Activated CD4-positive, alpha-beta memory T cell treated with anti-CD3 and anti-CD28 coated beads for 36 hours (primary cell): ENCODE measurements at regions of chr7 and their contacts with region 1.

Region 1: GRCh38 chr7:23597094-23598091 is at the start of gene CCDC126:
- DNase-seq: peak; percentile 88
- H3K4me3 Mint-ChIP-seq: peak within 1 kb of the TSS; percentile 87
- H3K27ac Mint-ChIP-seq: peak within 1 kb of the TSS; percentile 64
- H3K4me1 Mint-ChIP-seq: peaks cover 61% of the 10 kb centered on the region
- H3K27me3 Mint-ChIP-seq: no peaks in the 10 kb centered on the region
- total RNA-seq, gene CCDC126: 5.2 to 5.7 TPM

Region 2: GRCh38 chr7:23013715-23014649 is 583.4 kb before region 1 on chr7 and contains the start of gene HYCC1:
- CTCF ChIA-PET with region 1: no interaction called
- POLR2A ChIA-PET with region 1: no interaction called
- intact Hi-C with region 1: loop called (anchors 10 kb)
- DNase-seq: peak; percentile 100
- H3K4me3 Mint-ChIP-seq: peak within 1 kb of the TSS; percentile 94
- H3K27ac Mint-ChIP-seq: peak within 1 kb of the TSS; percentile 80
- H3K4me1 Mint-ChIP-seq: peaks cover 17% of the 10 kb centered on the region
- H3K27me3 Mint-ChIP-seq: no peaks in the 10 kb centered on the region
- total RNA-seq, gene HYCC1: 20.7 to 23.9 TPM

Region 3: DNA sequence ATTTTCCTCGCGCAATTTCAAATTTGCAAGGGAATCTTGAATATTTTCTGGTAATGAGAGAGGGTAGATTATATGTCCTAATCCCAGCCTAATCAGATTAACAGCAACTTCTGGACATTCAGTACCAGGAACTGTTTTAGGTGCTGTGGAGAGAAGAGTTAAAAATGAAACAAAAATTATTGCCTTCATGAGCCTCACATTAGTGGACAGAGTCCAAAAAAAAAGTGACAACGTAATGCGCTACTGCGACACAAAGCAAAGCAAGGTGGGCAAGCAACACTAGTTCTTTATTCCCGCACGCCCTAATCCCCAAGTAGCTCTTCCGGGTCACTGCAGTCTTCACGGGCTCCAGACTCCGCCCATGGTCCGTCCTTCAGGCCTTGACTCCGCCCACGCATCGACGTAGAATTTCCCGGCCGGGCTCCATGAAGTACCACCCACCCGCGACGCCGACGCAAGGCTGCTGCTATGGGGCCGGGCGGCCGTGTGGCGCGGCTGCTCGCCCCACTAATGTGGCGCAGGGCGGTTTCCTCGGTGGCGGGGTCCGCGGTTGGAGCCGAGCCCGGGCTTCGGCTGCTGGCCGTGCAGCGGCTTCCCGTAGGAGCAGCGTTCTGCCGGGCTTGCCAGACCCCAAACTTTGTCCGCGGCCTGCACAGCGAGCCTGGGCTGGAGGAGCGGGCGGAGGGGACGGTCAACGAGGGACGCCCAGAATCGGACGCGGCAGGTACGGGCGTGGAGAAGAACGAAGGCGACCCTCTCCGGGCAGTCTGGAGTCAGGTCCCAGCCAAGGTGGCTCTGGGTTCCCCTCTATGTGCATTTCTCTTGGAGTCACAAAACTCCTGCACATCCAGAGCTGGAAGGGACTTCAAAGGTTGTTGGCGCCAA is 298.3 kb before region 1 on chr7 and contains the start of gene MALSU1:
- CTCF ChIA-PET with region 1: no interaction called
- POLR2A ChIA-PET with region 1: no interaction called
- intact Hi-C with region 1: loop called (anchors 2 kb)
- DNase-seq: peak; percentile 98
- H3K4me3 Mint-ChIP-seq: peak within 1 kb of the TSS; percentile 96
- H3K27ac Mint-ChIP-seq: peak within 1 kb of the TSS; percentile 97
- H3K4me1 Mint-ChIP-seq: peaks cover 36% of the 10 kb centered on the region
- H3K27me3 Mint-ChIP-seq: peaks cover 3% of the 10 kb centered on the region
- total RNA-seq, gene MALSU1: 100 to 101 TPM

Region 4: GRCh38 chr7:23394488-23395171 is 202.8 kb before region 1 on chr7:
- CTCF ChIA-PET with region 1: no interaction called
- POLR2A ChIA-PET with region 1: no interaction called
- intact Hi-C with region 1: loop called (anchors 1 kb)
- DNase-seq: no peak
- H3K4me3 Mint-ChIP-seq: no peak overlapping the region
- H3K27ac Mint-ChIP-seq: no peak overlapping the region
- H3K4me1 Mint-ChIP-seq: peaks cover 20% of the 10 kb centered on the region
- H3K27me3 Mint-ChIP-seq: peaks cover 7% of the 10 kb centered on the region

Region 5: GRCh38 chr7:23546897-23547572 is 50.4 kb before region 1 on chr7:
- CTCF ChIA-PET with region 1: interaction called, 4 read pairs
- POLR2A ChIA-PET with region 1: no interaction called
- intact Hi-C with region 1: loop called (anchors 2 kb)
- DNase-seq: peak; percentile 86
- H3K4me3 Mint-ChIP-seq: no peak overlapping the region
- H3K27ac Mint-ChIP-seq: no peak overlapping the region
- H3K4me1 Mint-ChIP-seq: peaks cover 2% of the 10 kb centered on the region
- H3K27me3 Mint-ChIP-seq: no peaks in the 10 kb centered on the region

Region 6: GRCh38 chr7:24907311-24907886 is 1310.0 kb after region 1 on chr7:
- CTCF ChIA-PET with region 1: no interaction called
- POLR2A ChIA-PET with region 1: no interaction called
- intact Hi-C with region 1: loop called (anchors 2 kb)
- DNase-seq: peak; percentile 56
- H3K4me3 Mint-ChIP-seq: no peak overlapping the region
- H3K27ac Mint-ChIP-seq: no peak overlapping the region
- H3K4me1 Mint-ChIP-seq: peaks cover 42% of the 10 kb centered on the region
- H3K27me3 Mint-ChIP-seq: no peaks in the 10 kb centered on the region